ENCODE measurements at regions of chr15 and their contacts with region 1.

Region 1: DNA sequence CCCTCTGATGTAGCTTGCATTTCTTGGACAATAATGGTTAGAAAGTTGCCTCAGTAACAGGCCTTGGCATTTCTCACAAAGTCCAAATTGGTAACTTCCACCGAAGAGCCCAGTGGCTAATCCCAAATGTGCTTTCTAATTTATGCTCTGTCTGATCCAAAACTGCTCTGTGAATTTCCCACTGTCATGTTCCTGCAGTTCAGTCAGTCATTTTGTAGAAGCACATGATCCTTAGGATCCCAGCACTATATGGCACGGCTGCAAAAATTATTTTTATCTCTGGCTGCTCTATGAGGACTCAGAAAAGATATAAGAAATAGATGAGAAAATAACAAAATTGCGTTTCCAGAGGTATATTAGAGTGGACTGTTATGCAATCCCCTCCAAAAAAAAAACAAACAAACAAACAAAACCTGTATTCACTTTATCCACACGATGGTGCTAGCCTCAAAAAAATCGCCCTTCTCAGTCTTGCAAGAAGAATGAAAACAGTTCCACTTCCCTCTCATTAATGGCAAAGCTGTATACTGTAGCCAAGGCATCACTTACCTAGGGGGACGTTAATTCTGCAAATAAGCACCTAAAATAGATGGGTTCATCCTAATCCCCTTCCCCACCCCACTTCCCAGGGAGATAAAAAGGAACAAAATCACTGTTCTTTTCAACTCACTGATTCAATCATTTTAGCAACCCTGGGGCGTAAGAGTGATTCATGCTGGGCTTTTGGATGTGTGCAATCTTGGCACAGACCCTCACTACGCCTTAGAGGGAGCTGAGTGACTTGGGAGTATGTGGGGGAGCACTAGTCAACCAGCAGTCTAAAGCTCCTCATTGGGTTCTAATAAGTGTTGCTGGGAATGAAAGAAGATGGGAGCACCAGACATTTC is 61.3 kb downstream of the TMCO5A start:
- DNase-seq: no peak
- CTCF ChIP-seq: peak; percentile 14

Region 2: DNA sequence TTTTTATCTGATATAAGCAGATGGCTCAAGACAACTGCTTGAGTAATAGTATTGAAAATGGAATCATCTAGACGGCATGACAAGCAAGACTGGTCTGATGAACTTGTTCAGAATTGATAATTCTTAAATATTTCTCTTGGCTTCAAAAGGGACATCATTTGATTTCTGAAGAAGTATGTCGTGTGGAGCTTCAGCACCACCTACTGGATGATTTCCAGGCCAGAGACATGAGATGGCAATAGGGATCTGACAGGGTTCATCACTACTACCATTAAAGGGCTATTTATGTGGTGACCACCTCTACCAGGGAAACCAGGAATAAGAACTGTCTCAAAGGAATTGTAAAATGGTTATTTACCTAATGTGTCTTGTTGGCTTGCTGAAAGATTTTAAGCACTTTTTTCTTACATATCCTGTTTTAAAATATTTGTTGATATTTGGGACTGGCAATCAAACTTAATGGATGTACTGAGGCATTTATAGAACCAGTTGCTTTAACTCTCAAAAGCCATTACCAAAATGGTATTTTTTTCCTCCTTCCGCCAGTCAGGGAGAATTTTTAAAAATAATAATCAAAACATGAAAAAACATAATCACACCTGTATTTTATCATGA is 358.7 kb after region 1 on chr15:
- in situ Hi-C with region 1: loop called (anchors 5 kb)
- DNase-seq: peak; percentile 38
- CTCF ChIP-seq: peak; percentile 72